BJ (cell line): ENCODE measurements at regions of chr16 and their contacts with region 1.

Region 1: GRCh38 chr16:84084570-84085270 is 32.0 kb downstream of the MBTPS1 start:
- DNase-seq: no peak
- H3K4me3 ChIP-seq: no peak overlapping the region
- H3K27me3 ChIP-seq: no peaks in the 10 kb centered on the region
- CTCF ChIP-seq: peak; percentile 83

Region 2: DNA sequence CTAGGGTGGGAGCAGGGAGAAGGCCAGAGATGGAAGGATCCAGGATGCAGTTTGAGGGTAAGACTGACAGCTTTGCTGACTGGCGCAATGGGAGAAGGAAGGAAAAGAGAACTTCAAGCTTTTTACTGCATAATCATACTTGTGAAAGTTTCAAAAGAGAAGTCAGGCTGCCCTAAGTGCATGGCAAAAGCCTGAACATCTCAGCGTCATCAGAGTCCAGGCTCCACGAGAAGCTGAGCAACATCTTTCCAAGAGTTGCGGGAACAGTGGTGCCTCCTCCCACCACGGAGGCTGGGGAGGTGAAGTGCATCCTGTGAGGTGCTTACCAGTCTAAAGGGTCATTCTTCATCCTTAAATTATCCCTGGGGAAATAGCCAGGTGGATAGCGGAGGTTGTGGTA is 15.2 kb before region 1 on chr16:
- CTCF ChIA-PET with region 1: interaction called, 12 read pairs
- POLR2A ChIA-PET with region 1: no interaction called
- DNase-seq: no peak
- H3K4me3 ChIP-seq: no peak overlapping the region
- H3K27me3 ChIP-seq: no peaks in the 10 kb centered on the region
- CTCF ChIP-seq: no peak

Region 3: DNA sequence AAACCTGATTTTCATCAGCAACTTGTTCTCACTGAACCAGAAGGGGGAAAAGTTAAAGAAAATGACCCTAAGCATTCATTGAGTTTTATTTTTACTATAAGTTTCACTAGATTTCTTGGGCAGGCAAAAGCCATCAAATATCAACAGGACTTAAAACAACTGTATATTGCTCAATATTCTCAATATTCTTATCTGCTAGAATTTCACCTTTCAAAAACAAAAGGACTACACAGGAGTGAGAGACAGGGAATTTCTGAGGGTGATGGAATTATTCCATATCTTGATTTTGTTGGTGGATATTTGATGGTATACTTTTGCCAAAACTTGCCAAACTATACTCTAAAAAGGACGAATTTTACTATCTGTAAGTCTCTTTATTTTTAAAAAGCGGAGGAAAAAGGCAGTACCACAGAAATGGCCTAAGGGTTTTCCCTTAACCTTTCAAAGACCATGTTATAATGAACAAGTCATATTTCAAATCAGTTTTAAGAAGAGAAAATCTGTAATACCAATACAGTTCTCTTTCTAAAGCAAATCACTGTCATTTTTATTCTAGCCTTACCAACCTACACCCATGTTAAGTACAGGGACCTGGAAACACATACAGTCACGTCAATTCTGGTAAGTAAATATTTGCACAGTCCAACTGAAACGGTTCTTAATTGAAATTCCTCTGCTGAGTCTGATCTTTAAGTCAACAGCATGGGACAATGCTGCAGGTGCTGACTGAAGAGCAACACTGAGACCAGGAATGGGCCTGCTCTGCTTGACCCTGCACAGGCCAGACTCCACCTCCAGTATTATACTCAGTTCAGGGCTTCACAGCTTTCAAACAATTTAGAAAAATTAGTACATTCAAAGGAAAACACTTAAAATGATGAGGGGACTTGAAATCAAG is 11.6 kb after region 1 on chr16:
- CTCF ChIA-PET with region 1: interaction called, 14 read pairs
- POLR2A ChIA-PET with region 1: no interaction called
- DNase-seq: no peak
- H3K4me3 ChIP-seq: no peak overlapping the region
- H3K27me3 ChIP-seq: no peaks in the 10 kb centered on the region
- CTCF ChIP-seq: no peak